K562 (cell line): ENCODE measurements at regions of chr17 and their contacts with region 1.

Region 1: DNA sequence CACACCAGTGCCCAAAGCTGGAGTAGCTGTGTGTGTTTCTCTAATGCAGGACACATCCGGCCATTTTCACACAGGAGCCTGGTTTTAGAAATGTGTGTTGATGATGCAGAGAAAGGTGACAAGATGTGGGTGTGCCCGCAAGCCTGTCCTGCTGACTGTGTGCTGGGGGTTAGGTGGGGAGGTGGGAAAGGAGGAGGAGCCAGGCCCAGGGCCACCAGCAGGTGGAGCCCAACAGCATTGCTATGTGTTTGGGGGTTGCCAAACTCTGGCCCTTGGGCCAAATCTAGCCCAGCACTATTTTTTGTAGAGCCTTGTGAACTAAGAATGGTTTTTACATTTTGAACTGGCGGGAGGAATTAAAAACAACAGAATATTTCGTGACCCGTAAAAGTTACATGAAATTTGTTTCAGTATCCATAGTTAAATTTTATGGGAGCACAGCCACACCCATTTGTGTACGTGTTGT is 61.7 kb upstream of the LGALS9 start:
- DNase-seq: peak; percentile 87 to 93 (median 91)
- ATAC-seq: peak; percentile 80
- H3K4me3 ChIP-seq: no peak overlapping the region
- H3K27ac ChIP-seq: peak overlapping the region; percentile 92
- H3K4me1 ChIP-seq: peaks cover 61 to 84% of the 10 kb centered on the region in 2 experiments
- H3K27me3 ChIP-seq: no peaks in the 10 kb centered on the region
- CTCF ChIP-seq: peak; percentile 84 to 96 (median 89)
- EP300 ChIP-seq: peak; percentile 45; the same call in 1 of the 2 replicates
- POLR2A ChIP-seq: no peak
- RAD21 ChIP-seq: peak; percentile 62 to 78

Region 2: GRCh38 chr17:27449541-27449940 is 119.7 kb before region 1 on chr17:
- CTCF ChIA-PET with region 1: no interaction called
- POLR2A ChIA-PET with region 1: no interaction called
- in situ Hi-C with region 1: no loop called
- intact Hi-C with region 1: no loop called
- DNase-seq: no peak
- ATAC-seq: no peak
- H3K4me3 ChIP-seq: no peak overlapping the region
- H3K27ac ChIP-seq: no peak overlapping the region
- H3K4me1 ChIP-seq: peaks cover 33 to 46% of the 10 kb centered on the region in 2 experiments; a peak in 4 of 5 replicates
- H3K27me3 ChIP-seq: no peaks in the 10 kb centered on the region
- CTCF ChIP-seq: no peak
- EP300 ChIP-seq: no peak
- POLR2A ChIP-seq: no peak
- RAD21 ChIP-seq: no peak

Region 3: DNA sequence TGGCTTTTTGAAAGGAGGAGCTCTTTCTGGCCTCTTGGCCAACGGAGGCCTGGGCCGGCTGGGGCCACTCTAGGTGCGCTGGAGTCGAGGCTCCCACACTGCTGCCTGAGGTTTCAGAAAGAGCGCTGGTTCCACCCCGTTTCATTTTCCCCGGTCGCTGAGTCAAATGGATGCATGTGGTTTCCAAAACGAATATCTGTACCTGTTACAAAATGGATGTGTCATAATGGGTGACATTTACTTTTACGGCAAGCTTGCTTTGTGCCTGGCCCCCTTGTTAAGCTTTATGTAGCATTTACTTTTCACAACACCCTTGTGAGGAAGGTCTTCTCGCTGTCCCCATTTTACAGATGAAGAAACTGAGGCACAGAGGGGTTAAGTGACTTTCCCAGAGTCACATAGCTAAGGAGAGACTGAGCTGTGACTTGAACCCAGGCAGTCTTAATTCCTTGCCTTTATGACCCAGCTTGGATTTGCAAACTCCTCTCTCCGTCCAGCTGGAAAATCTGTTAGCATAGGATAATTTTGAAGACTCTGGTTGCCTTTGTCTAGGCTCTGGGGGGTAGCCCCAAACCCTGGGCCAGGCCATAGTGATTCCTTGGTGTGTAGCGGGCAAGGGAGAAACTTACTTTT is 102.4 kb before region 1 on chr17:
- CTCF ChIA-PET with region 1: no interaction called
- POLR2A ChIA-PET with region 1: interaction called, 4 read pairs
- in situ Hi-C with region 1: no loop called
- intact Hi-C with region 1: loop called (anchors 2 kb)
- DNase-seq: peak in 2 of 4 experiments; percentile 36 to 60
- ATAC-seq: peak; percentile 60
- H3K4me3 ChIP-seq: no peak overlapping the region
- H3K27ac ChIP-seq: peak overlapping the region; percentile 66
- H3K4me1 ChIP-seq: peaks cover 54 to 71% of the 10 kb centered on the region in 2 experiments
- H3K27me3 ChIP-seq: no peaks in the 10 kb centered on the region
- CTCF ChIP-seq: no peak
- EP300 ChIP-seq: no peak
- POLR2A ChIP-seq: no peak
- RAD21 ChIP-seq: no peak

Region 4: DNA sequence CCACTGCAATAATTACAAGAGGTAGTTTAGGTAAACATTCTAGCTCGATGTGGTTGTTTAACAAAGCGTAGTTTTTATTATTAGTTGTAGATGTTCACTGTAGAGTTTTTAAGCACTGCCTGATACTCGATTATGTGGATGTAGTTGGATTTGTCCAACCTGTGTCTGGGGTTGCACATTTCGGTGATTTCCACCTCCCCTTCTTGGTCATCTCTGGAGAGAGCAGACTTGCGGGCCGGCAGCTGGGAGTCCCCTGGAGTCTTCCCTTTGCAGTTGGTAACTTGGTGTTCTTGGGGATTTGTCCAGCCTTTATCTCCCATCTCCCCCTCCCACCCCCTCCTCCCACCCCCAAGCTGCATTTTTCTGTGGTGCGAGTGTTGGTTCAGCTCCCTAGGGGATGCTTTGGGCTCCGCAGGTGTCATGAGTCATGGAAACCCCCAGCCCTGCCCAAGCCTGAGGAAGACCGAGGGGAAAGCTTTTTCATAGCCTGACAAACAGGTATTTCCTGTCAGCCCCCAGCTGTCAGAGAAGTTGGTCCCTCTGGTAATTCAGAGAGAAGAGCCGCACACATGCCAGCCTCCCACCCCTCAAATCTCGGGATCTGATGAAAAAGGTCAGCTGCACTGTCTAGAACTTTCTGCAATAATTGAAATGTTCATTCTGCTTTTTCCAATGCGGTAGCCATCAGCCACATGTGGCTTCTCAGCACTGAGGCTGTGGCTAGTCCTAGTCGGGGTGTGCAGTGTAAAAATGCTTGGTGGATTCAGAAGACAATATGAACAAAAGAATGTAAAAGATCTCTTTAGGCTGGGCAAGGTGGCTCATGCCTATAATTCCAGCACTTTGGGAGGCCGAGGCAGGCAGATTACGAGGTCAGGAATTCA is 62.7 kb before region 1 on chr17:
- CTCF ChIA-PET with region 1: no interaction called
- POLR2A ChIA-PET with region 1: no interaction called
- in situ Hi-C with region 1: no loop called
- intact Hi-C with region 1: no loop called
- DNase-seq: peak in 2 of 4 experiments; percentile 33 to 34
- ATAC-seq: peak; percentile 20; the same call in 2 of the 3 replicates
- H3K4me3 ChIP-seq: no peak overlapping the region
- H3K27ac ChIP-seq: no peak overlapping the region
- H3K4me1 ChIP-seq: peaks cover 10 to 14% of the 10 kb centered on the region in 2 experiments; a peak in 4 of 5 replicates
- H3K27me3 ChIP-seq: no peaks in the 10 kb centered on the region
- CTCF ChIP-seq: no peak
- EP300 ChIP-seq: no peak
- POLR2A ChIP-seq: no peak
- RAD21 ChIP-seq: no peak

Region 5: GRCh38 chr17:27551701-27552468 is 17.4 kb before region 1 on chr17:
- CTCF ChIA-PET with region 1: no interaction called
- POLR2A ChIA-PET with region 1: interaction called, 12 read pairs
- in situ Hi-C with region 1: no loop called
- intact Hi-C with region 1: no loop called
- DNase-seq: peak in 2 of 4 experiments; percentile 47 to 52
- ATAC-seq: no peak
- H3K4me3 ChIP-seq: no peak overlapping the region
- H3K27ac ChIP-seq: no peak overlapping the region
- H3K4me1 ChIP-seq: peaks cover 17 to 21% of the 10 kb centered on the region in 2 experiments
- H3K27me3 ChIP-seq: no peaks in the 10 kb centered on the region
- CTCF ChIP-seq: no peak
- EP300 ChIP-seq: no peak
- POLR2A ChIP-seq: no peak
- RAD21 ChIP-seq: no peak

Region 6: GRCh38 chr17:27609611-27610303 is 40.5 kb after region 1 on chr17:
- CTCF ChIA-PET with region 1: no interaction called
- POLR2A ChIA-PET with region 1: no interaction called
- in situ Hi-C with region 1: no loop called
- intact Hi-C with region 1: no loop called
- DNase-seq: peak in 1 of 4 experiments; percentile 31
- ATAC-seq: peak; percentile 61
- H3K4me3 ChIP-seq: no peak overlapping the region
- H3K27ac ChIP-seq: no peak overlapping the region
- H3K4me1 ChIP-seq: peaks cover 5 to 15% of the 10 kb centered on the region in 2 experiments; a peak in 4 of 5 replicates
- H3K27me3 ChIP-seq: no peaks in the 10 kb centered on the region
- CTCF ChIP-seq: peak; percentile 52 to 65 (median 54)
- EP300 ChIP-seq: no peak
- POLR2A ChIP-seq: no peak
- RAD21 ChIP-seq: peak in 1 of 2 experiments; percentile 43; a peak in 2 of 4 replicates

Region 7: GRCh38 chr17:27644586-27644985 is 75.3 kb after region 1 on chr17:
- CTCF ChIA-PET with region 1: no interaction called
- POLR2A ChIA-PET with region 1: no interaction called
- in situ Hi-C with region 1: no loop called
- intact Hi-C with region 1: no loop called
- DNase-seq: no peak
- ATAC-seq: no peak
- H3K4me3 ChIP-seq: no peak overlapping the region
- H3K27ac ChIP-seq: no peak overlapping the region
- H3K4me1 ChIP-seq: peaks cover 9 to 20% of the 10 kb centered on the region in 2 experiments; a peak in 4 of 5 replicates
- H3K27me3 ChIP-seq: no peaks in the 10 kb centered on the region
- CTCF ChIP-seq: no peak
- EP300 ChIP-seq: no peak
- POLR2A ChIP-seq: no peak
- RAD21 ChIP-seq: no peak